Activated naive CD4-positive, alpha-beta T cell treated with anti-CD3 and anti-CD28 coated beads for 36 hours (primary cell): ENCODE measurements at regions of chr19 and their contacts with region 1.

Region 1: DNA sequence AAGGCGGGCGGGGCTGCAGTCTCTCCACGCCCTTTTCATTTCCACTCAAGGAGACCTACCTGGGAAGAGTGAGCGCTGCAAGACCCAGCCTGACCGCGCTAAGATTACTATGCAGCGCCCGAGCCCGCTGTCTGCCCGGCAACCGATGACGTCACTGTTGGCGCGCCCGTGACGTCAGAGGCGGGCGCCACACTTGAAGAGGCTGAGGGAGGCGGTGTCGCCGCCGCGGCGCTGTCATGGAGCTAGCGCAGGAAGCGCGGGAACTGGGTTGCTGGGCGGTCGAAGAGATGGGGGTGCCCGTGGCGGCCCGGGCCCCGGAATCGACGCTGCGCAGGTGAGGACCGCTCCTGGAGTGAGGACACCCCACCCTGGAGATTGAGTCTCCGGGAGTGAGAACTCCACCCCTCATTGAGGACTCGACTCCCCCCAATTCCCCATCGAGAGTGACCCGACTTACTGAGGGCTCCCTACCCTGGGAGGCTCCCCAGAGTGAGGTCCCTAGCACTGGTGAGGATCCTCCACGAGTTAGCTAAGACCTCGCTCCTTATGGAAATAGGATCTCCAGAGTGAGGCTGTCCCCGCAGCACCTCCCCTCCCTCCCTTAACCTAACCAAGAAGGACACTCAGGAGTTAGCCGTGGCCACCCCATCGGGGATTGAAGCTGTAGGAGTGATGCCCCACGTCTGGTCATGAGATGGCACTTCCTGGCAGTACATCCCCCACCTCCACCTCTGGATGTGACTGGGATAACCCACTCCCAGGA is at the start of gene HAUS5:
- DNase-seq: peak; percentile 96
- H3K4me3 Mint-ChIP-seq: peak within 1 kb of the TSS; percentile 86
- H3K27ac Mint-ChIP-seq: peak within 1 kb of the TSS; percentile 87
- H3K4me1 Mint-ChIP-seq: peaks cover 26% of the 10 kb centered on the region
- H3K27me3 Mint-ChIP-seq: no peaks in the 10 kb centered on the region
- total RNA-seq, gene HAUS5: 40.4 to 42.5 TPM

Region 2: GRCh38 chr19:35628565-35629331 is 16.0 kb after region 1 on chr19 and contains the start of gene RBM42:
- CTCF ChIA-PET with region 1: no interaction called
- intact Hi-C with region 1: loop called (anchors 1 kb)
- DNase-seq: peak; percentile 97
- H3K4me3 Mint-ChIP-seq: peak within 1 kb of the TSS; percentile 100
- H3K27ac Mint-ChIP-seq: peak within 1 kb of the TSS; percentile 95
- H3K4me1 Mint-ChIP-seq: peaks cover 19% of the 10 kb centered on the region
- H3K27me3 Mint-ChIP-seq: no peaks in the 10 kb centered on the region
- total RNA-seq, gene RBM42: 64.2 to 66.2 TPM